ENCODE measurements at regions of chr6 and their contacts with region 1.

Region 1: DNA sequence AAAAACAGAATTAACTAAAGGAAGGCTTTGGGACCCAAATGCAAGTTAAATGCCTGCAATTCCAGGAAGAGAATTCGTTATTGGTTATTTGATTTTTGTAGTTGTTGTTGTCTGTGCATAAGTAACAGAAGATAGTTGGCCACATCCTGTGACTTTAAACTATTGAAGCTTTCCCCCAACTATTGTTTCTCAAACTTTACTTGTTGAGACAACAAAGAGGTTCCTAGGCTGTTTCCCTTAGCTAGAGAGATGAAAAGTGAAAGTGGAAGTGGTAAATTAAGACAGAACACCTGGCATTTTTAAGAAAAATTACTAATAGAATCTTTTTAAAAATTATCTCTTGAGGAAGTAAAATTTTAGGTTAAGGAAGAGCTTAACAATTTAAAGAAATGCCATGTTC is 525.2 kb downstream of the PKHD1 start:
- DNase-seq: no peak
- H3K4me3 ChIP-seq: no peak overlapping the region
- H3K27ac ChIP-seq: no peak overlapping the region
- H3K4me1 ChIP-seq: no peaks in the 10 kb centered on the region
- H3K27me3 ChIP-seq: no peaks in the 10 kb centered on the region
- CTCF ChIP-seq: no peak

Region 2: DNA sequence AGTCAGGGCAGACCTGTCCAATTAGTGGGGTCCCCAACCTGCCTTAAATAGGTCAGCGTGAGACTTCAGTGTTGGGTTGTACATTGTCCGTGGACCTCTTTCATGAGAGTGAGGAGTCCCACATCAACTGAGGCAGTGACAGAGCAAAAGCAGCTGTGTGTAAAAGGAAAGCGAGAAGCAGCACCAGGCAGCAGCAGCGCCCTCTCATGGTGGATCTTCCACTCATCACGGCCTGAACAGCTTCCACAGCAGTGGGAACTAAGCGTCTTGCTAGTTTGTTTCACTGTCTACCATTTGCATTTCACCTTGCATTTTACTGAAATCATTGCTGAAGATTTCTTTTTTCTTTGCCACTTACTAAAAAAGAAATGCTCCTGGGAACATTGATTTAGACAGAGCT is 191.4 kb after region 1 on chr6:
- CTCF ChIA-PET with region 1: no interaction called
- dilution Hi-C with region 1: no loop called
- in situ Hi-C with region 1: loop called (anchors 10 kb)
- intact Hi-C with region 1: loop called (anchors 1 kb)
- DNase-seq: peak; percentile 10
- H3K4me3 ChIP-seq: no peak overlapping the region
- H3K27ac ChIP-seq: no peak overlapping the region
- H3K4me1 ChIP-seq: no peaks in the 10 kb centered on the region
- H3K27me3 ChIP-seq: peaks cover 2% of the 10 kb centered on the region
- CTCF ChIP-seq: peak; percentile 68 to 81

Region 3: DNA sequence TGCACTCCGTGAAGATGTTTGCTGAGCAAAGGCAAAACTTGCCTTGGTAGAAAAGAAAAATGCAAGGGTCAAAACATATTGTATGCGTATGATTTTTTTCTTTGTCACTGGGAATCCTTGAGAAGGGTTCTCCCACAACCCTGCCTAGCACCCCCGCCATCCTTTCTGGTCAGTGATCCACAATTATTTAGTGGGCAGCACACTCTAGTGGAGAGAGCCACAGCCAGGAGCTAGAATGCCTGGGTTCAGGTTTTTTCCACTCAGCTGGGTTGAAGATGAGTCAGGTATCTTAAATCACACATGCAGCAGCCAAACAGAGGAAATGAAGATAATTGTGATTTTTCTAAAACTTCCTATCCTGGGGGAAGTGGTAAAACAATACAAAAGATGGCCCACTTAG is 282.1 kb after region 1 on chr6:
- CTCF ChIA-PET with region 1: no interaction called
- dilution Hi-C with region 1: no loop called
- in situ Hi-C with region 1: loop called in 1 of 2 experiments (anchors 25 kb)
- intact Hi-C with region 1: loop called (anchors 1 kb)
- DNase-seq: no peak
- H3K4me3 ChIP-seq: no peak overlapping the region
- H3K27ac ChIP-seq: no peak overlapping the region
- H3K4me1 ChIP-seq: no peaks in the 10 kb centered on the region
- H3K27me3 ChIP-seq: no peaks in the 10 kb centered on the region
- CTCF ChIP-seq: peak; percentile 20 to 31

Region 4: DNA sequence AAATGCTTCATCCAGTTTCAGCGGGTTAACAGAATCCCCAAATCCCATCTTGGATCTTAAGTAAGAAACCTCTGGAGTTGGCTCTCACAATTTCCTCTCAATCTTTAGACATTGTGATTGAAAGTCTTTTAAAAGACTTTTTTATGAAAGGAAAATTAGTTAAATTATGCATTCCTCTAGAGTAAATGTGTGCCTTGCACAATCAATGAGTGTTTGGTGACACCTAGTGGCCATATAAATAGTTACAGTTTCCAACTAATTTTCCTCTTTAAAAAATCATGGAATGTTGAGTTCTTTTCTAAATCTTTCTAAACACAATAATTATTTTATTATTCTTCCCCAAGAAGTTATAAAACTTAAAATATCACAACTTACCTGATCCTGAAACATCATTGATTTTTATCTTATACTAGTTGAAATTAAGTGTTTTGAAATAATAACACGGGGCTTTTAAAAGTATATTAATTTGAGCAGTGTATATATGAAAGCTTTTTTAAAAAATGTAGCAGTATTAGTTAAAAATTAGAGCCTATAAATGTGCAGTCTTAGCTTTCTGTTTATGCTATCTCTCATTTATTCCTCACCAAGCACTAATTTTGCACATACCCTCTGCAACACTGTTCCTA is 458.9 kb after region 1 on chr6:
- CTCF ChIA-PET with region 1: no interaction called
- dilution Hi-C with region 1: no loop called
- in situ Hi-C with region 1: no loop called
- intact Hi-C with region 1: loop called (anchors 5 kb)
- DNase-seq: peak; percentile 10
- H3K4me3 ChIP-seq: no peak overlapping the region
- H3K27ac ChIP-seq: no peak overlapping the region
- H3K4me1 ChIP-seq: no peaks in the 10 kb centered on the region
- H3K27me3 ChIP-seq: peaks cover 2% of the 10 kb centered on the region
- CTCF ChIP-seq: peak; percentile 56 to 65